Breast epithelium (tissue), 4 donors: ENCODE measurements at regions of chr12 and their contacts with region 1.

Region 1: DNA sequence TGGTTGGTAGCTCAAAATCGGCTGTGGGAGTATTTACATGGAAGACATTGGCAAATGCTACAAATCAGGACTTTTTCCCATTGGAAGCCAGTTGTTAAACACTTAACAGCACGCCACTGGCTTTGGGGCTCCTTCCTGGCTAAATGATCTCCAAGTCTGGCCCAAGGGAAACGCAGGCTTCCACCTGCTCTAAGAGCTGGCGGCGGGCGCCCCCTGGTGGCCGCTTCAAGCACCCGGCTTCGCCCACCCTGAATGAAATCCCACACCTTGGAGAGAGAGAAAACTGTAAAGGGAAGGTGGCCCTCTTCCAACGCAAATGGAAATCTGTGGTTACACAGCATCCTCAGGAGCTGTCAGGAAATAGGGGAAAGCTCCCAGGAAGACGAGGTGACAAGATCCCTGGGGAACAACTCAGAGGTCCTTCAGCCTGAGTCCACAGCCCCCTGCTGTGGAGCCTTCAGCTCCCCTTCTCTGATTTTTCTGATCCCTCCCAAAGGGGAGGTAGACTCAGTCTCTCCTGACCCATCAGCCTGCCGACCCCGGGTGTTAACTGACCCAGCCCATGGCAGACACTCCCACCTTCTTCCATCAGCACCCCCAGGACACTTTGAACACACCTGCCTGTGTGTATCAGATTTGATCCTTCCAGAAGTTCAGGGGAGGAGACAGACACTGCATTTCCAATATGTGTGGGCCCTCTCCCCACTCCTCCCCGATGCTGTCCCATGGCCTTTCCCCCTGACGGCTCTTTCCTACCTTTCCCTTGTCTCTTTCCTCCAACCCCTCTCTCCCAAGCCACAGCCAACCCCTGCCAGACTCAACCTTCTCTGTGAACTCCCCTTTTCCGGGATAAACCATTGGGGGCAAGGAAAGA is 15.4 kb downstream of the SELPLG start:
- DNase-seq: peak; percentile 65 to 76
- H3K4me3 ChIP-seq: no peak overlapping the region
- H3K27ac ChIP-seq: no peak overlapping the region
- H3K4me1 ChIP-seq: no peaks in the 10 kb centered on the region
- H3K27me3 ChIP-seq: no peaks in the 10 kb centered on the region
- CTCF ChIP-seq: peak; percentile 89 to 95 (median 95)
- POLR2A ChIP-seq: no peak

Region 2: DNA sequence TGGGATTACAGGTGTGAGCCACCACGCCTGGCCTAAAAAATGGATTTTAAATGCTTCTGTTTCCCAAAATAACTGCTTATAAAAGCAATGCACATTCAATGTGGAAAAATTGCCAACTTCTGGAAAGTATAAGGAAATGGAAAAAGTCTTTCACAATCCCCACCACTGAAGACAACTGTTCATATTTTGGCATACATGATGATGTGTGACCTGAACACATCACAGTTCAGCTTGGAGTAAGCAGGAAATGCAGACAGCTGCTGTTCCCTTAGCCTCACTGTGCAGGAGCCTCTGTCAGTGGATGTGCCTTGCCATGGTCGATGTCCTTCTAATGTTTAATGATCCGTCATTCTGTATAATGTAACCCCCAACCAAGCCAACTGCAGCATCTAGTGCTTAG is 1636.5 kb before region 1 on chr12:
- intact Hi-C with region 1: loop called (anchors 5 kb)
- DNase-seq: no peak
- H3K4me3 ChIP-seq: no peak overlapping the region
- H3K27ac ChIP-seq: peak overlapping the region; percentile 57 to 73
- H3K4me1 ChIP-seq: peaks cover 5 to 10% of the 10 kb centered on the region in 2 donors
- H3K27me3 ChIP-seq: no peaks in the 10 kb centered on the region
- CTCF ChIP-seq: no peak
- POLR2A ChIP-seq: no peak

Region 3: GRCh38 chr12:108597559-108598471 is 20.5 kb before region 1 on chr12 and contains the start of gene TMEM119:
- intact Hi-C with region 1: no loop called
- DNase-seq: no peak
- H3K4me3 ChIP-seq: peak within 1 kb of the TSS; percentile 44 to 65 (median 49)
- H3K27ac ChIP-seq: peak within 1 kb of the TSS; percentile 6 to 83
- H3K4me1 ChIP-seq: no peaks in the 10 kb centered on the region
- H3K27me3 ChIP-seq: no peaks in the 10 kb centered on the region
- CTCF ChIP-seq: no peak
- POLR2A ChIP-seq: no peak
- total RNA-seq, gene TMEM119: 12.1 to 21.0 (median 12.5) TPM

Region 4: GRCh38 chr12:108643941-108644810 is 25.9 kb after region 1 on chr12:
- intact Hi-C with region 1: loop called (anchors 2 kb)
- DNase-seq: no peak
- H3K4me3 ChIP-seq: no peak overlapping the region
- H3K27ac ChIP-seq: peak overlapping the region; percentile 8 to 29
- H3K4me1 ChIP-seq: no peaks in the 10 kb centered on the region
- H3K27me3 ChIP-seq: no peaks in the 10 kb centered on the region
- CTCF ChIP-seq: no peak
- POLR2A ChIP-seq: no peak